A549 (cell line): ENCODE measurements at regions of chr7 and their contacts with region 1.

Region 1: DNA sequence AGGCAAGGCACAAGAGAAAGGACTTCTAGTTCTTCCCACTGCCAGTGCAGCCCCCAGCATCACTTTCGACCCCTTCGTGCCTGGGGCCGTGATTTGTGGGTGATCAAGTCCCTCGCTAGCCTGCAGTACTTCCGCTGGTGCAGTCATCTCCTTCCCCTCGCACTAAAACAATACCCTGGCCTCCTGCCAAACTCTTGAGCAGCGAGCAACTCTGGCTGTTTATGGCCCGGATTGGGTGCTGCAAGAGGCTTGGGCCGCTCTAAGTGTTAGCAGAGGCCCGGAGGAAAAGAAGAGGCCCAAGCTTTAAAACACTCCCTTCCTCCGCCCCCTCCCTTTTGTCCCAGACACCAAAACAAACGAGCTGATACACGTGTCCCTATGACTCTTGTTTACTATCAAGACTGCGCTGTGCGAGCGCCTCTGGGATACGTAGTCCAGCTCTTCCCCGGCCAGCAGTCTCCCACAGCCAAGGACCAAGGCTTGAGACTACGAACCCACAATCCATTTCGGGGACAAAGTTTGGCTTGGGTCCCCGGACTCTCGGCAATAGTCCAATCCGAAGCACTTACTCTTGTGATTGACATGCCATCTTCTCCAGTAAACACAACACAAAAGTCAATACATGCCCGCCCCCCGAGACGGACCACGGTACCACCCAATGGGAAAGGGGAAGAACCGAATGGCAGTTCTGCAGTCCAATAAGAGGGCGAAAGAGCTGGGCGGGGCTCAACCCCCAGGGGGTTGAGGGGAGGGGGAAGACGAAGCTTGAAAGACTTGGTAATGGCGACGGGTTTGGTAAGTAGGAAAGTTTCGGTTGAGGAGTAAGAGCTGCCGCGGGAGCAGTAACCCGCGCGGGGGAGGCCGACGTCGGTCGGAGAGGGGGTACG is at the start of gene HBP1:
- DNase-seq: peak; percentile 97 to 100
- ATAC-seq: peak; percentile 86 to 95
- H3K4me3 ChIP-seq: peak within 1 kb of the TSS; percentile 72
- H3K27ac ChIP-seq: peak within 1 kb of the TSS; percentile 85 to 92
- H3K4me1 ChIP-seq: peaks cover 21% of the 10 kb centered on the region; the same call in 2 of the 3 replicates
- CTCF ChIP-seq: no peak
- EP300 ChIP-seq: no peak
- POLR2A ChIP-seq: no peak
- RAD21 ChIP-seq: no peak
- polyA plus RNA-seq, gene HBP1: 52.4 and 60.1 TPM in 2 replicates

Region 2: GRCh38 chr7:106775552-106775936 is 392.9 kb before region 1 on chr7:
- CTCF ChIA-PET with region 1: no interaction called
- POLR2A ChIA-PET with region 1: interaction called, 10 read pairs
- DNase-seq: peak; percentile 47 to 75
- ATAC-seq: peak; percentile 80
- H3K4me3 ChIP-seq: peak overlapping the region; percentile 35
- H3K27ac ChIP-seq: peak overlapping the region; percentile 82 to 92
- H3K4me1 ChIP-seq: peaks cover 53% of the 10 kb centered on the region
- CTCF ChIP-seq: no peak
- EP300 ChIP-seq: no peak; a peak in 1 of 5 replicates
- POLR2A ChIP-seq: no peak
- RAD21 ChIP-seq: no peak

Region 3: DNA sequence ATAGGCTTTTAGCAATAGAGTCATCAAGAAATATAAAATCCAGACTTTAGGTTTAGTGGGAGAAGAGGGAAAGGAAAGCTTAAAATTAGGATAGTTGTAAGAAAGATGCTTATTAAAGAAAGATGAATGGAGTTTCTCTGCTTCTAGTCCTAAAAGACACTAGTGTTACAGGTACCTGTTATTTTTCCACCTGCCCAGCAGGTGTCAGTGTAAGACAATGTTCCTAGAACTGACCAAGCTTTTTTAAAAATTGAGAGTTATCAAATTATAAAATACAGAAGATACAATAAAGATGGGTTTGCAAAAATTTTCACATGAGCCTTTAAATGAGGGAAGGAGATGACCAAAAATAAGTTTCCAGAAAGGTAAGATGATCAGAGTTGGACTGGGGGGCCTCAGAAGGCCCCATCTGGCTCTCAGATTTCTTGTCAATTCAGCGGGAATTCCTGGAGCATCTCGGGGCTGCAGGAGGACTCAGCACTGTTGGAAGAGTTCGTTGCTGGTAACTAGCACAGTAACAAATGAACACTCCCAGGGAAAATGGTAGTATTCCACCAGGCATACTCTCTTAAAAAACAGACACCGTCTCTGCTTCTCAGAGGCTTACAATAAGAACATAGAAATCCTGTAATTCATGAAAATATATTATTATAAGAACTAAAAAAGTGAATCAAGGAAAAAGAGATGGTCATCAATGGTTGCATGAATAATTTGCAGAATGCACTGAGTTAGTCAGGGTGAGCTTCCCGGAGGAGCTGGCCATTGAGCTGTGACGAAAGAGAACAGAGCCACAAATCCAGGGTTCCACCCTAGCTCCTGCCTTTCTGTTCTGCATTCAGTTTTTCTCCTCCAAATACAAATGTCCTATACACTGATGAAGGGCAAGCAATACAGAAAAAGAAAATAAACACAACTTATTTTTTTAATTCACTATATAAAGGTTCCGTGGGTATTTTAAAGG is 375.2 kb before region 1 on chr7:
- CTCF ChIA-PET with region 1: interaction called, 14 read pairs
- POLR2A ChIA-PET with region 1: interaction called, 6 read pairs
- DNase-seq: peak; percentile 25 to 38
- ATAC-seq: peak in 1 of 2 experiments; percentile 39; a peak in 1 of 6 replicates
- H3K4me3 ChIP-seq: no peak overlapping the region
- H3K27ac ChIP-seq: no peak overlapping the region
- H3K4me1 ChIP-seq: no peaks in the 10 kb centered on the region
- CTCF ChIP-seq: peak; percentile 89
- EP300 ChIP-seq: no peak
- POLR2A ChIP-seq: no peak
- RAD21 ChIP-seq: peak; percentile 85 to 89

Region 4: DNA sequence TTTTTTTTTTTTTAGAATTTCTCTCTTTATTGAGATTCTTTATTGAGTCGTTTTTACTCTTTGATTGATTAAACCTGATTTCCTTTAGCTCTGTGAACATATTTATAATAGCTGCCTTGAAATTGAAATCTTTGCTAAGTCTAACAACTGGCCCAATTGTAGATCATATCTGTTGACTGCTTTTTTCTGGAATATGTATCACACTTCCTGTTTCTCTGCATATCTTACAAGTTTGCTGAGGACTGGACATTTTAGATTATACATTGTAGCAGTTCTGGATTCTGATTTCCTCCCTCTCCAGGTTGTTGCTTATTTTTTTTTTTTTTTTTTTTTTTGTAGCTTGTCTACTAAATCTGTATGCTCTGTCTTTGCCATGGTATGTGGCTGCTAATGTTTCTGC is 67.7 kb before region 1 on chr7:
- CTCF ChIA-PET with region 1: no interaction called
- POLR2A ChIA-PET with region 1: no interaction called
- DNase-seq: no peak
- ATAC-seq: no peak
- H3K4me3 ChIP-seq: no peak overlapping the region
- H3K27ac ChIP-seq: no peak overlapping the region
- H3K4me1 ChIP-seq: no peaks in the 10 kb centered on the region
- CTCF ChIP-seq: no peak
- EP300 ChIP-seq: no peak
- POLR2A ChIP-seq: no peak
- RAD21 ChIP-seq: no peak

Region 5: DNA sequence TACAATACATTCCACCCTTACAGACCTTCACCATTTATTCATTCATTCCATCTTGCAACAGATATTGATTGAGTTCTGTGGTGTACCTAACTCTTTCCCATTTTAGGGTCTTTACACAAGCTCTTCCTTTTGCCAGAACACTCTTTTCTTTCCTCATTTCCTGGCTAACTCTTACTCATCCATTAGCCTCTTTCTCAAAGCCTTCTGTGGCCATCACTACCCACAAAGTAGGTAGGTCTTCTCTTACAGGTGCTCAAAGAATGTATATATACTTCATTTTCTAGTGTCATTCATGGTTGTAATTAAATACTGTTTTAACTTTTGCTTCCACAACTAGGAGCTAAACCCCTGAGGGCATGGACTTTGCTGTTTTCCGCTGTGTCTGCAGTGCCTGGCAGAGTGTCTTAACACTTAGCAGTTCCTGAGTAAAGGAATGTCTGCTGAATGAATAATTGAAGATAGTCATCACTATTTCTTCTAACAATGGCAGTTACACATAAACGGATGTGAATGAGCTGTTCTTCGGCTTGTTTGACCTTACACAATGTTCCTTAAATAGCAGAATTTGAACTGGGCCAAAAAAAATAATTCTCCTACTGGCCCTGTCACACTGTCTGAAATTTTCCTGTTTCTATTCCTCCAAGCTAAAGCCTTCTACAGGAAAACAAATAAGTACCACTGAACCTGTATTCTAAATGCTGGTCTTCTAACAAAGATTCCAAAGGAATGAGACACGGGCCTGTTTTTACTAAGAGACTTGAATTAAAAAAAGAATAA is 426.7 kb after region 1 on chr7:
- CTCF ChIA-PET with region 1: no interaction called
- POLR2A ChIA-PET with region 1: interaction called, 11 read pairs
- DNase-seq: peak in 1 of 2 experiments; percentile 22
- ATAC-seq: peak; percentile 43 to 74; a peak in 4 of 6 replicates
- H3K4me3 ChIP-seq: no peak overlapping the region
- H3K27ac ChIP-seq: no peak overlapping the region
- H3K4me1 ChIP-seq: peaks cover 12% of the 10 kb centered on the region; the same call in 2 of the 3 replicates
- CTCF ChIP-seq: no peak
- EP300 ChIP-seq: no peak
- POLR2A ChIP-seq: no peak
- RAD21 ChIP-seq: no peak

Region 6: DNA sequence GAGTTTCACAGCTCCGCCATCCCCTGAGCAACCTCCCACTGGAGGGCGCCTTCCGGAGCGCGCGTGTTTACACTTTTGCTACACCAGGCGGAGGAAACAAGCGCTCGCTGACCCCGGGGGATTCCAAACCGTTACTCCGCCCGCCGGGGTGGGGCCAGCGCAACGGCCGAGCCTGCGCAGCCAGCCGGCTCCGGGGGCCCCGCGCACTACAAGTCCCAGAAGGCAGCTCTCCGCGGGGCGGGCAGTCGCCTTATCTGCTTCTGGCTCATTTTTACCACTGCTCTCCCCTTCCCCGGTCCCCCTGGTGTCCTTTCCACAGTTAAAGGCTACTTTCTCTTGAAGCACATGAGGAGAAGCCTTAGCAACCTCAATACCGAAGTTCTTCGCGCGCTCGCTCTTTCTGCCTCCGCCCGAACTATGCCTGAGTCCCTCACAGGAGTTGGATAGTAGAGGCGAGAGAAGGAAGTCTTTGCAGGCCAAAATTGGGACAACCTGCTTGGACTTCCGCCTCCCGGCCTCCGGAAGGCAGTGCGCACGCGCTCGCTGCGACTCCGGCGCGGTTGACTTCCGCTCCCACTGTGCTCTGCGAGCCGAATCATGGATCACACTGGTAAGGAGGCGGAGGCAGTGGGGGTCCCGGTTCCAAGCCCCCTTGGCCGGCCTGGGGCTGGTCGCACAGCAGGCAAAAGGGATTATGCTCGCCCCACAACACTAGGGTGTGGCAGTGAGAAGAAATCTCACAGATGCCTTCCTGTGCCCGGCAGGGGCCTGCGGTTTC is 575.3 kb after region 1 on chr7 and contains the start of gene CBLL1:
- CTCF ChIA-PET with region 1: no interaction called
- POLR2A ChIA-PET with region 1: interaction called, 28 read pairs
- DNase-seq: peak; percentile 89 to 96
- ATAC-seq: peak; percentile 95 to 98
- H3K4me3 ChIP-seq: peak within 1 kb of the TSS; percentile 66
- H3K27ac ChIP-seq: peak within 1 kb of the TSS; percentile 95 to 96
- H3K4me1 ChIP-seq: peaks cover 29% of the 10 kb centered on the region
- CTCF ChIP-seq: peak; percentile 77
- EP300 ChIP-seq: no peak; a peak in 1 of 5 replicates
- POLR2A ChIP-seq: peak; percentile 56
- RAD21 ChIP-seq: peak; percentile 49 to 68
- polyA plus RNA-seq, gene CBLL1: 26.1 and 27.3 TPM in 2 replicates